Caco-2 (cell line): ENCODE measurements at regions of chr6 and their contacts with region 1.

Region 1: DNA sequence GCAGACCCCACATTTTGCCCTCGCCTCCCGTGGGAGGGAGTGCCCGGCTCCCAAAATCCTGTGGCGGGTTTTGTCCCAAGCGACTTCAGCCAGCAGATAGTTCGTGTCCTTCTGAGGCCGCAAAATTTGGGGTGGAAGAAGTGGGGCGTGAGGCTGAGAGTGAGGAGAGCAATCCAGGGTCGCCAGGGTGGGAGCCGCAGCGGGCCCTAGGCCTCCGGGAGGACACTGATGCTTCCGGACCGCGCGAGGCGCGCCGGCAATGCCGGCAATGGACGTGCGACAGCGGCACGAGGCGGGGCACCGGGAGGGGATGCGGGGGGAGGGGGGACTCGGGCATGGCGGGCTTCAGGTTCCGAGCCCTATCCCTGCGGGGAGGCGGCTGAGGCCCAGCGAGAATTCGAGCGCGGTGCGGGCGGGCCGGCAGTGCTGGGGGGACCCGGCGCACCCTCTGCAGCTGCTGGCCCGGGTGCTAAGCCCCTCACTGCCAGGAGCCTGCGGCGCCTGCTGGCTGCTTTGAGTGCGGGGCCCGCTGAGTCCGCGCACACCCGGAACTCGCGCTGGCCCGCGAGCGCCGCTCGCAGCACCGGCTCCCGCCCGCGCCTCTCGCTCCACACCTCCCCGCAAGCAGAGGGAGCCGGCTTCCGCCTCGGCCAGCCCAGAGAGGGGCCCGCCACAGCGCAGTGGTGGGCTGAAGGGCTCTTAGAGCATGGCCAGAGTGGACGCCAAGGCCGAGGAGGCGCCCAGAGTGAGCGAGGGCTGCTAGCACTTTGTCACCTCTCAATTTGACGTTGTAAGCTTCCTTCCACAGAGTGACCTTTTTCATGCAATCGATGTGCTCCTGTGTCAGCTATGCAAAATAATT is 143.8 kb downstream of the LPA start:
- DNase-seq: peak; percentile 68 to 85
- H3K4me3 ChIP-seq: peak overlapping the region; percentile 49
- H3K4me3 Mint-ChIP-seq: peak overlapping the region; percentile 96
- H3K27ac Mint-ChIP-seq: peak overlapping the region; percentile 63
- H3K4me1 ChIP-seq: no peaks in the 10 kb centered on the region
- H3K4me1 Mint-ChIP-seq: no peaks in the 10 kb centered on the region
- H3K27me3 ChIP-seq: no peaks in the 10 kb centered on the region; the same call in 1 of the 2 replicates
- H3K27me3 Mint-ChIP-seq: peaks cover 3% of the 10 kb centered on the region
- CTCF ChIP-seq: peak in 1 of 2 experiments; percentile 27

Region 2: DNA sequence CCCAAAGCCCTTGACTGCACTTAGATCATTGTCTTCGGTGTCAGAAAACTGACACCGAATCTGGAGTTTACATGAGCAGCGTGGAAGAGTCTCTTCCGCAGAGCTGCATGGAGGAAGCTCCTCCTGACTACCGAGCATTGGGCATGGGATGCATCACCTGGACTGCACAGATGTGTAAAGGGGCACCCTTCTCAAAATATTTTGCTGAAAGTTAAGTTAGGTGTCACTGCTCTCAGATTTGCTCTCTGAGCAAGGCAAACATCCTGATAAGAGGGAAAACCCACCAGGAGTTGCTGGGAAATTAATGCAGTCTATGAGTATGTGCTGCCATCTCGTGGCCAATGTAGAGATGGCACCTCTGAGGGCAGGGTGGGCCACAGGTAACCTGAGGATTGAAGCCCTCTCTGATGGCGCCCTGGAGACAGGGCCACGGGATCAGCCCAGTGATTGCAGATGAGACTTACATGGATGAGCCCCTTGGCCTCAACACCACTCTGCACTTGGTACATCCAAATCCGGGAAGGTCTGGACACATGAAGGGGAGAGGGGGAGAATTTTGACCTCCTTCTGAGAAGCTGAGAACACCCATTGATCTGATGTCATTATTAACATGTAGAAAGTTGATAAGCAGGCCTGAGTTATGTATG is 13.9 kb after region 1 on chr6:
- CTCF ChIA-PET with region 1: interaction called, 29 read pairs
- POLR2A ChIA-PET with region 1: no interaction called
- intact Hi-C with region 1: loop called (anchors 1 kb)
- DNase-seq: peak; percentile 35 to 67
- H3K4me3 ChIP-seq: no peak overlapping the region
- H3K4me3 Mint-ChIP-seq: no peak overlapping the region
- H3K27ac Mint-ChIP-seq: no peak overlapping the region
- H3K4me1 ChIP-seq: no peaks in the 10 kb centered on the region
- H3K4me1 Mint-ChIP-seq: no peaks in the 10 kb centered on the region
- H3K27me3 ChIP-seq: no peaks in the 10 kb centered on the region
- H3K27me3 Mint-ChIP-seq: no peaks in the 10 kb centered on the region
- CTCF ChIP-seq: peak; percentile 88 to 89

Region 3: GRCh38 chr6:160667639-160668481 is 147.6 kb after region 1 on chr6:
- CTCF ChIA-PET with region 1: no interaction called
- POLR2A ChIA-PET with region 1: no interaction called
- intact Hi-C with region 1: loop called (anchors 1 kb)
- DNase-seq: peak; percentile 47 to 55
- H3K4me3 ChIP-seq: no peak overlapping the region
- H3K4me3 Mint-ChIP-seq: no peak overlapping the region
- H3K27ac Mint-ChIP-seq: no peak overlapping the region
- H3K4me1 ChIP-seq: no peaks in the 10 kb centered on the region
- H3K4me1 Mint-ChIP-seq: no peaks in the 10 kb centered on the region
- H3K27me3 ChIP-seq: no peaks in the 10 kb centered on the region
- H3K27me3 Mint-ChIP-seq: peaks cover 5% of the 10 kb centered on the region
- CTCF ChIP-seq: peak; percentile 60 to 65

Region 4: GRCh38 chr6:160882706-160883359 is 362.6 kb after region 1 on chr6:
- CTCF ChIA-PET with region 1: no interaction called
- POLR2A ChIA-PET with region 1: no interaction called
- intact Hi-C with region 1: no loop called
- DNase-seq: no peak
- H3K4me3 ChIP-seq: no peak overlapping the region
- H3K4me3 Mint-ChIP-seq: no peak overlapping the region
- H3K27ac Mint-ChIP-seq: no peak overlapping the region
- H3K4me1 ChIP-seq: no peaks in the 10 kb centered on the region
- H3K4me1 Mint-ChIP-seq: peaks cover 6% of the 10 kb centered on the region
- H3K27me3 ChIP-seq: no peaks in the 10 kb centered on the region
- H3K27me3 Mint-ChIP-seq: peaks cover 3% of the 10 kb centered on the region
- CTCF ChIP-seq: no peak